ENCODE measurements at regions of chr7 and their contacts with region 1.

Region 1: DNA sequence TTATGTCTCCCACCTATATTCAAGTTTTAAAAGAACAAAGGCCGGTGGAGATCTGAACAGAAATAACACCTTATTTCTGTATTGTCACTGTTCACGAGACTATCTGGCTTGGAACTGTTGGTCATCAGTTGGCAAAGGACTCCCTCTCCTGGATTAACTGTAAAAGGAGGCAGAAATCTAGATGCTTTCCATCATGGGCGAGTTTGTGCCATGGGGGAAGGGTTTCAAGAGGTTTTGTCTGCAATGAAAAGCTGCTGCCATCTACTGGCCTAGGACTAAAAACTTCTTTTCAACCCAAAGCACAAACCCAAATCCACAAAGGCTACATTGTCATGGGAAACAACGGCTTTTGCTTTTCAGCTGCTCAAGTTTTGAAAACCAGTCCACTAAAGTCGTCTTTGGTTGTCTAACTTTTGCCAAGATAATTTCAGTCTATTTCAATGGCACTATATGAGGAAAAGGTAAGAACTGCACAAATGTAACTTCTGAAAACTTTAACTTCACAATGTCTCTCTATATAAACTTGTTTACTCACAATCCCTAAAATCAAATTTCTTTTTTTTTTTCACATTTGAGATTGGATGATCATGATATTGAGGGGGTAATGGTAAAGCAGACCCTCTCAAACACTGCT is 196.8 kb downstream of the SKAP2 start:
- DNase-seq: peak; percentile 94
- ATAC-seq: peak; percentile 92
- H3K4me3 ChIP-seq: no peak overlapping the region
- H3K27ac ChIP-seq: no peak overlapping the region
- H3K4me1 ChIP-seq: peaks cover 4% of the 10 kb centered on the region; the same call in 1 of the 2 replicates
- H3K27me3 ChIP-seq: no peaks in the 10 kb centered on the region
- CTCF ChIP-seq: peak; percentile 91
- EP300 ChIP-seq: no peak
- POLR2A ChIP-seq: no peak
- RAD21 ChIP-seq: peak; percentile 90

Region 2: GRCh38 chr7:25894902-25895791 is 772.5 kb before region 1 on chr7:
- CTCF ChIA-PET with region 1: no interaction called
- POLR2A ChIA-PET with region 1: no interaction called
- in situ Hi-C with region 1: loop called (anchors 10 kb)
- intact Hi-C with region 1: loop called (anchors 1 kb)
- DNase-seq: no peak
- ATAC-seq: peak; percentile 76
- H3K4me3 ChIP-seq: no peak overlapping the region; a peak in 1 of 6 replicates
- H3K27ac ChIP-seq: no peak overlapping the region
- H3K4me1 ChIP-seq: peaks cover 21% of the 10 kb centered on the region
- H3K27me3 ChIP-seq: peaks cover 0 to under 1% of the 10 kb centered on the region in 2 experiments; a peak in 1 of 5 replicates
- CTCF ChIP-seq: peak; percentile 60
- EP300 ChIP-seq: no peak
- POLR2A ChIP-seq: no peak
- RAD21 ChIP-seq: 0 out of 2 replicates have a peak, but pooled peaks have one; percentile 10

Region 3: GRCh38 chr7:26078437-26079336 is 588.9 kb before region 1 on chr7:
- CTCF ChIA-PET with region 1: no interaction called
- POLR2A ChIA-PET with region 1: no interaction called
- in situ Hi-C with region 1: loop called (anchors 25 kb)
- intact Hi-C with region 1: no loop called
- DNase-seq: peak; percentile 57
- ATAC-seq: peak; percentile 98
- H3K4me3 ChIP-seq: peak overlapping the region in 1 of 3 experiments; percentile 30; a peak in 1 of 6 replicates
- H3K27ac ChIP-seq: no peak overlapping the region
- H3K4me1 ChIP-seq: peaks cover 28% of the 10 kb centered on the region
- H3K27me3 ChIP-seq: no peaks in the 10 kb centered on the region
- CTCF ChIP-seq: peak; percentile 84
- EP300 ChIP-seq: no peak
- POLR2A ChIP-seq: no peak
- RAD21 ChIP-seq: peak; percentile 65; the same call in 1 of the 2 replicates

Region 4: DNA sequence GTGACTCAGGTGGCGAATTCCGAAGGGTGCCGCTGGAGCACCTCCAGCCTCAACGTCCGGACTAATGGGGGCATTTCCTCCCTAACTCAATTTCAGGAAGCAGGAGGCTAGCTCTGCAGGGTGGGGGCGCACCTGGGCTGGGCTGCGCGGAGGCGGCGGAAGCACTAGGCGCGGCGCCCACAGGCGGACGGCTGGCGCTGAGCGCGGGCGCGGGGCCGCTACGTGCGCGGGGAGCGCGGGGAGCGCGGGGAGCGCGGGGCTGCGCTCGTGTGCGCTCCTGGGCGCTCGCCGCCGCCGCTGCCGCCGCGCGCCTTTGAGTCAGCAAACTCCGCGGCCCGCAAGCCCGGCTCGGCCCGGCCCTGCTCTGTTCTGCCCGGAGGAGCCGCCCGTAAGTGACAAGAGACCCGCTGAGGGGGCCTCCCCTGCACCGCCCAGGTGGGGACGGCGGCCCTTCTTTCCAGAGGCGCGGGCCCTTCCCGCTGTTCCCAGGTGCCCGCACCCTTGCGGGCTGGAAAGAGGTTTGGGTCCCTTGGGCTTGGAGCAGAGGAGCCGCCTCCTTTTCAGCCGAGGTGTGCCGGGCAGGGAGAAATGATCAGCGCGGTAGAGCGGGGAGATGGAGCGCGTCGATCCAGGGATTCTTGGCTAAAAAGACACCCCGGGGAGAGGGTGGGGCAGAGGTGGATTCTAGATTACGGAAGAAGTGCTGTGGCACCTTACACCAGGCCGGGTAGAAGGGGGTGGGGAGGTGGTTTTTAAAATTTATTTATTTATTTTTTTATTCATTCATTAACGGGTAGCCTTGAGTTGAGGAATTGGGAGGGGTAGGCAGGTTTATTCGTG is 375.7 kb before region 1 on chr7 and contains the start of gene SNX10:
- CTCF ChIA-PET with region 1: no interaction called
- POLR2A ChIA-PET with region 1: no interaction called
- in situ Hi-C with region 1: no loop called
- intact Hi-C with region 1: loop called (anchors 5 kb)
- DNase-seq: peak; percentile 59
- ATAC-seq: peak; percentile 95
- H3K4me3 ChIP-seq: peak within 1 kb of the TSS; percentile 90 to 96 (median 94)
- H3K27ac ChIP-seq: peak within 1 kb of the TSS; percentile 77
- H3K4me1 ChIP-seq: peaks cover 26% of the 10 kb centered on the region
- H3K27me3 ChIP-seq: peaks cover 0 to 3% of the 10 kb centered on the region in 2 experiments; a peak in 2 of 5 replicates
- CTCF ChIP-seq: peak; percentile 86
- EP300 ChIP-seq: no peak
- POLR2A ChIP-seq: no peak; a peak in 1 of 4 replicates
- RAD21 ChIP-seq: peak; percentile 79
- total RNA-seq, gene SNX10: 26.0 and 43.1 TPM in 2 replicates

Region 5: GRCh38 chr7:26376175-26376917 is 291.3 kb before region 1 on chr7:
- CTCF ChIA-PET with region 1: interaction called, 23 read pairs
- POLR2A ChIA-PET with region 1: no interaction called
- in situ Hi-C with region 1: loop called (anchors 5 kb)
- intact Hi-C with region 1: no loop called
- DNase-seq: peak; percentile 23
- ATAC-seq: peak; percentile 93
- H3K4me3 ChIP-seq: peak overlapping the region; percentile 57 to 74 (median 72)
- H3K27ac ChIP-seq: peak overlapping the region; percentile 31
- H3K4me1 ChIP-seq: peaks cover 5% of the 10 kb centered on the region; the same call in 1 of the 2 replicates
- H3K27me3 ChIP-seq: no peaks in the 10 kb centered on the region
- CTCF ChIP-seq: no peak
- EP300 ChIP-seq: no peak
- POLR2A ChIP-seq: 0 out of 4 replicates have a peak, but pooled peaks of 1 of the 2 experiments have one; percentile 20
- RAD21 ChIP-seq: no peak

Region 6: GRCh38 chr7:26534649-26535482 is 132.8 kb before region 1 on chr7:
- CTCF ChIA-PET with region 1: no interaction called
- POLR2A ChIA-PET with region 1: no interaction called
- in situ Hi-C with region 1: no loop called
- intact Hi-C with region 1: no loop called
- DNase-seq: no peak
- ATAC-seq: no peak
- H3K4me3 ChIP-seq: no peak overlapping the region
- H3K27ac ChIP-seq: no peak overlapping the region
- H3K4me1 ChIP-seq: no peaks in the 10 kb centered on the region
- H3K27me3 ChIP-seq: peaks cover 1 to 41% of the 10 kb centered on the region in 2 experiments; a peak in 4 of 5 replicates
- CTCF ChIP-seq: no peak
- EP300 ChIP-seq: no peak
- POLR2A ChIP-seq: no peak
- RAD21 ChIP-seq: no peak

Region 7: GRCh38 chr7:26815426-26815825 is 147.8 kb after region 1 on chr7:
- CTCF ChIA-PET with region 1: no interaction called
- POLR2A ChIA-PET with region 1: no interaction called
- in situ Hi-C with region 1: no loop called
- intact Hi-C with region 1: no loop called
- DNase-seq: no peak
- ATAC-seq: no peak
- H3K4me3 ChIP-seq: no peak overlapping the region
- H3K27ac ChIP-seq: no peak overlapping the region
- H3K4me1 ChIP-seq: peaks cover 9% of the 10 kb centered on the region
- H3K27me3 ChIP-seq: no peaks in the 10 kb centered on the region
- CTCF ChIP-seq: no peak
- EP300 ChIP-seq: no peak
- POLR2A ChIP-seq: no peak
- RAD21 ChIP-seq: no peak

Region 8: GRCh38 chr7:27651702-27652101 is 984.1 kb after region 1 on chr7:
- CTCF ChIA-PET with region 1: no interaction called
- POLR2A ChIA-PET with region 1: no interaction called
- in situ Hi-C with region 1: no loop called
- intact Hi-C with region 1: no loop called
- DNase-seq: no peak
- ATAC-seq: no peak
- H3K4me3 ChIP-seq: no peak overlapping the region
- H3K27ac ChIP-seq: no peak overlapping the region
- H3K4me1 ChIP-seq: peaks cover under 1% of the 10 kb centered on the region; the same call in 1 of the 2 replicates
- H3K27me3 ChIP-seq: no peaks in the 10 kb centered on the region
- CTCF ChIP-seq: no peak
- EP300 ChIP-seq: no peak
- POLR2A ChIP-seq: no peak
- RAD21 ChIP-seq: no peak